B cell (primary cell): ENCODE measurements at regions of chr2 and their contacts with region 1.

Region 1: GRCh38 chr2:169694113-169694903 is at the starts of genes CFAP210 and PHOSPHO2:
- DNase-seq: peak; percentile 99
- ATAC-seq: peak; percentile 97
- H3K4me3 ChIP-seq: peak within 1 kb of the TSS; percentile 59 to 76 (median 72)
- H3K4me3 Mint-ChIP-seq: peak within 1 kb of the TSS; percentile 98
- H3K27ac ChIP-seq: peak within 1 kb of the TSS; percentile 85 to 90
- H3K27ac Mint-ChIP-seq: peak within 1 kb of the TSS; percentile 99
- H3K4me1 ChIP-seq: peaks cover 10 to 14% of the 10 kb centered on the region in 2 donors
- H3K4me1 Mint-ChIP-seq: peaks cover 18% of the 10 kb centered on the region
- H3K27me3 ChIP-seq: peaks cover 0 to 12% (median 7%) of the 10 kb centered on the region in 4 experiments
- H3K27me3 Mint-ChIP-seq: peaks cover 15% of the 10 kb centered on the region
- CTCF ChIP-seq: no peak
- total RNA-seq, gene CFAP210: not detected in 2 replicates
- total RNA-seq, gene PHOSPHO2: 8.4 and 9.4 TPM in 2 replicates

Region 2: DNA sequence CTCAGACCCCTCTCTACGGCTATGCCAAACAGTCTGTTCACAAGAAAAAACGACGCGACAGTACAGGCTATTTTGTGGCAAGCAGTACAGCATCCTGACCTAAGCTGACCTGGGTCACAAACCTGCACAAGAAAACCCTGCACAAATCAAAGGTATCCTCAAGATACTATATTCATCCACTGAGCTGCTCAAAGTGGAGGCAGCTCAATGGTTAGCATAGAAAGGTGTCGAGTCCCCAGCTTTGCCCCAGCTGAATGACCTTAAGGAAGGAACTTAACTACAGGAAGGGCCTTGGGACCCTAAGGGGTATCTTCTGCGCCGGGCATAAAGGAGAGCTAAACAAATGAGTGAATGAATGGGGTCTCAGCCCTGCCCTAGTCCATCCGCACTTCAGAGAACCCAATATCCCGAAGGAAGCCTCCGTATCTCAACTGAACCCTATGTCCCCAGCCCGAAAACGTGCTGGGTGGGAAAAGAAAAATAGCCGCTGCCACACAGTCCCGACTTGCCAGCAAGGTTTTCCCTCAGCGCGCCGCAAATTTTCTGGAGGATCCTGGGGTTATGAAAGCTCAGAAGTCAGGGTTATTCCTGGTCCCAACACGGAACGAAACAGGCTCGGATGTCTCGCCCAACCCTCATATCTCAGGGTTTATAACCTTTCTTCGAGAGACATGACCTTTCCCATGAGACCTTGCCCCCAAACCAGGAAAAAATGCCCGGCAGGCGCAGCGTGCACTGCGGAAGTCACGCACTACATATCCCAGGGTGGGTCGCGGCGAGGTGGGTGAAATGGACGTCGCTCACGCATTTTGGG is 120.9 kb before region 1 on chr2 and contains the start of gene FASTKD1:
- CTCF ChIA-PET with region 1: interaction called, 3 read pairs
- POLR2A ChIA-PET with region 1: no interaction called
- intact Hi-C with region 1: loop called (anchors 1 kb)
- DNase-seq: peak; percentile 90
- ATAC-seq: peak; percentile 100
- H3K4me3 ChIP-seq: peak within 1 kb of the TSS; percentile 74 to 99 (median 89)
- H3K4me3 Mint-ChIP-seq: peak within 1 kb of the TSS; percentile 96
- H3K27ac ChIP-seq: peak within 1 kb of the TSS; percentile 75 to 84
- H3K27ac Mint-ChIP-seq: peak within 1 kb of the TSS; percentile 88
- H3K4me1 ChIP-seq: peaks cover 5 to 6% of the 10 kb centered on the region in 2 donors
- H3K4me1 Mint-ChIP-seq: peaks cover 14% of the 10 kb centered on the region
- H3K27me3 ChIP-seq: no peaks in the 10 kb centered on the region
- H3K27me3 Mint-ChIP-seq: no peaks in the 10 kb centered on the region
- CTCF ChIP-seq: no peak
- total RNA-seq, gene FASTKD1: 28.1 and 31.0 TPM in 2 replicates

Region 3: GRCh38 chr2:169584005-169584877 is 110.1 kb before region 1 on chr2 and contains the start of gene PPIG:
- CTCF ChIA-PET with region 1: no interaction called
- POLR2A ChIA-PET with region 1: interaction called, 3 read pairs
- intact Hi-C with region 1: loop called (anchors 1 kb)
- DNase-seq: peak; percentile 94
- ATAC-seq: peak; percentile 89
- H3K4me3 ChIP-seq: peak within 1 kb of the TSS; percentile 70 to 99 (median 98)
- H3K4me3 Mint-ChIP-seq: peak within 1 kb of the TSS; percentile 99
- H3K27ac ChIP-seq: peak within 1 kb of the TSS; percentile 96 to 99
- H3K27ac Mint-ChIP-seq: peak within 1 kb of the TSS; percentile 99
- H3K4me1 ChIP-seq: peaks cover 12 to 24% of the 10 kb centered on the region in 2 donors
- H3K4me1 Mint-ChIP-seq: peaks cover 30% of the 10 kb centered on the region
- H3K27me3 ChIP-seq: no peaks in the 10 kb centered on the region
- H3K27me3 Mint-ChIP-seq: no peaks in the 10 kb centered on the region
- CTCF ChIP-seq: no peak
- total RNA-seq, gene PPIG: 78.6 and 82.4 TPM in 2 replicates

Region 4: DNA sequence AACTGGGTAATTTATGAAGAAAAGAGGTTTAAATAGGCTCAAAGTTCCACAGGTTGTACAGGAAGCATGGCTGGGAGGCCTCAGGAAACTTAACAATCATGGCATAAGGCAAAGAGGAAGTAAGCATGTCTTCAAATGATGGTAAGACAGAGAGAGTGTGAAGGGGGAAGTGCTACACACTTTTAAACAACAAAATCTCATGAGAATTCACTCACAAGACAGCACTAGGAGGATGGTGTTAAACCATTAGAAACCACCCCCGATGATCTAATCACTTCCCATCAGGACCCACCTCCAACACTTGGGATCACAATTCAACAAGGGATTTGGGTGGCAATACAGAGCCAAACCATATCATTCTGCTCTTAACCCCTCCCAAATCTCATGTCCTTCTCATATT is 35.0 kb before region 1 on chr2:
- CTCF ChIA-PET with region 1: no interaction called
- POLR2A ChIA-PET with region 1: no interaction called
- intact Hi-C with region 1: loop called (anchors 5 kb)
- DNase-seq: peak; percentile 55
- ATAC-seq: peak; percentile 73
- H3K4me3 ChIP-seq: no peak overlapping the region
- H3K4me3 Mint-ChIP-seq: peak overlapping the region; percentile 13
- H3K27ac ChIP-seq: peak overlapping the region; percentile 3 to 71
- H3K27ac Mint-ChIP-seq: peak overlapping the region; percentile 60
- H3K4me1 ChIP-seq: peaks cover 15 to 18% of the 10 kb centered on the region in 2 donors
- H3K4me1 Mint-ChIP-seq: peaks cover 16% of the 10 kb centered on the region
- H3K27me3 ChIP-seq: no peaks in the 10 kb centered on the region
- H3K27me3 Mint-ChIP-seq: no peaks in the 10 kb centered on the region
- CTCF ChIP-seq: no peak

Region 5: DNA sequence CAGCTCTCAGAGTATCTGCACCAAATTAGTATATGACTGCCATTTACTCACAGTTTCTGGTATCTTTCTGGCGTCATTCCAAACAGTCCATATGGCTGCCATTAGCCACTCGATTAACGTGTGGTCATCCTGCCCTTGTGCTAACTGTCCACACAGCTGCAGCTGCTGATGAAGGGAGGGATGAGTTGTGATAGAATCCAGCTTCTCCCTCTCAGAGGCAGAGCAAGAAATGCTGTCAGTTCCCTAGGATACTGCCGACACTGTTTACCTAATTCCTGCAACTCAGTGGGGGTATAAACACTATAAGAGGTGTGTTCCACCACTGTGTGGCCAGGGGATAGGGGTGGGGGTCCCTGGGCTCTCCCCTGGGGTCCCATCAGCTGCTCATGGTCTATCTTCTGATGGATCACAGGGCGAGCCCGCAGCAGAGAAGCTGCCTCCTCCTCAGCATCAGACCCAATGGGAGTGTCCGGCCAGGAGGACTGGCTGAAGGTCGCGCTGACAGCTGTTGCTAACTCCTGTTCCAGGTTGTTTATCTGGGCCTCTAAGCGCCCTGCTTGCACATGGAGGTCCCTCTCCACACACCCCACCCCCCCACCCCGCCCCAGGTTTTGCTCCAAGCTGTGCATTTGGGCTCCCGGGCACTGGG is 22.1 kb after region 1 on chr2:
- CTCF ChIA-PET with region 1: no interaction called
- POLR2A ChIA-PET with region 1: no interaction called
- intact Hi-C with region 1: no loop called
- DNase-seq: no peak
- ATAC-seq: no peak
- H3K4me3 ChIP-seq: no peak overlapping the region
- H3K4me3 Mint-ChIP-seq: no peak overlapping the region
- H3K27ac ChIP-seq: no peak overlapping the region
- H3K27ac Mint-ChIP-seq: no peak overlapping the region
- H3K4me1 ChIP-seq: no peaks in the 10 kb centered on the region
- H3K4me1 Mint-ChIP-seq: no peaks in the 10 kb centered on the region
- H3K27me3 ChIP-seq: no peaks in the 10 kb centered on the region
- H3K27me3 Mint-ChIP-seq: no peaks in the 10 kb centered on the region
- CTCF ChIP-seq: no peak

Region 6: DNA sequence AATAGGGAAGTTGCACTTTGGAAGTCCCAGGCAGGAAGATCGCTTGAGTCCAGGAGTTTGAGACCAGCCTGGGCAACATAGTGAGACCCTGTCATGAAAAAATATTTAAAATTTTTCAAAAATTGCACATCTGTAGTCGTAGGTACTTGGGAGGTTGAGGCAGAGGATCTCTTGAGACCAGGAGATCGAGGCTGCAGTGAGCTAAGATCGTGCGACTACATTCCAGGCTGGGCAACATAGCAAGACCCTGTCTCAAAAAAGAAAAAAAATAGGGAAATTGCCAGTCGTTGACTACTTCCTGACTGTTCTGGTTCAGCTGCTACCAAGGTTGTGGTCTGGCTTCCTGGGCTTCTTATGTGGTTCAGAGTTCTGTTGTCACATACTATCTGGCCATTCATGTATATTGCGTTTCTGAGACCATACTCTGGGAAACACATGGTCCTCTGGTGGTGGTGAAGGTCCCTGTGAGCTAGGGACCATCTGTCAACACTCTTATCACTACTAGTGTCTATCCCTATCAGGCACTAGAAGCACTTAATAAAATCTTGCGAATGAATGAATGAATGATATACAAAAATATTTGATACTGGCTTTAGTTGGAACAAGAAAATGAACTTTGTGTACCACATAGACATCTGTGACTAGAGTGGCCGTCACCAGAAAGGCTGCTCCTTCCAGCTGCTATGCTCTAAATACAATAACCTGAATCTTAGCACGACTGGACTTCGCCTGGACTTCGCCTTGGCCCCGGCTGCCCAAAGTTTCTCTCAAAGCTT is 38.5 kb after region 1 on chr2:
- CTCF ChIA-PET with region 1: no interaction called
- POLR2A ChIA-PET with region 1: no interaction called
- intact Hi-C with region 1: loop called (anchors 2 kb)
- DNase-seq: peak; percentile 29
- ATAC-seq: no peak
- H3K4me3 ChIP-seq: peak overlapping the region in 3 of 5 experiments; percentile 59 to 73 (median 67)
- H3K4me3 Mint-ChIP-seq: peak overlapping the region; percentile 97
- H3K27ac ChIP-seq: no peak overlapping the region
- H3K27ac Mint-ChIP-seq: no peak overlapping the region
- H3K4me1 ChIP-seq: peaks cover 14 to 15% of the 10 kb centered on the region in 2 donors
- H3K4me1 Mint-ChIP-seq: peaks cover 20% of the 10 kb centered on the region
- H3K27me3 ChIP-seq: peaks cover 0 to 16% (median 11%) of the 10 kb centered on the region in 4 experiments
- H3K27me3 Mint-ChIP-seq: peaks cover 13% of the 10 kb centered on the region
- CTCF ChIP-seq: no peak

Region 7: DNA sequence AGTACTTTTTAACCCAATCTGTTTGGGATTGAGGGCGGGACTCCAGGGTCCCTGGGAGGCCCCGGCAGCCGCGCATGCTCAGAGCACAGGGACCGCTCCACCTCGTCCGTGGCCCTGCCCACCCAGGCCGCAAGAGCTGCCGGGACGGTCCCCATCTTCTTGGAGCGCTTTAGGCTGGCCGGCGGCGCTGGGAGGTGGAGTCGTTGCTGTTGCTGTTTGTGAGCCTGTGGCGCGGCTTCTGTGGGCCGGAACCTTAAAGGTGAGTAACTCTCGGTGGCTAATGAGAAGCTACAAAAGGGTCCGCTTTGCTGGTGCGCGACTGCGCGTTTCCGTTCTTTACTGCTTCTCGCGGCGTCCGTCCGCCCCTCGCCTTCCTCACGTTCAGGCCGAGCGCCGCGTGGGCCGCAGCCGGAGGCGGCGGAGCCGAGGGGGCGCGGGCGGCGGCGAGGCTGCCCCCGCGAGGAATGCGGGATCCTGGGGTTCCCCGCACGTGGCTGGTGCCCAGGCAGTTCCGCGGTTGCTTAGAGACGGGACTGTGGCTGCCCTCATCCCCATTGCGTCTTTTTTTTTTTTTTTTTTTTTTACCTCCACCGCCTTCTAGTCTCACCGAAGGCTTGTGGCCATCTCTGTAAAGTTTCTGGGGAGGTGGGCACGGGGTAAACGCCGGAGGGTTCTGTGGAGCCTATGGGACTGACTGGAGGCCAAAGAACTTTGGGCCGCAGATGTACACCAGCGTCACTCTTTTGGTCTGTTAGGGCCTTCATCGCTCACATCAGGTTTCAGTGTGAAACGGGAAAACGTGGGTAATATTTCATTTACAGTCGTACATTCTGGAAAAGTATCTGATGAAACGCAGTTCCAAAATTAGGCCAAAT is 104.6 kb after region 1 on chr2 and contains the start of gene SSB:
- CTCF ChIA-PET with region 1: no interaction called
- POLR2A ChIA-PET with region 1: interaction called, 3 read pairs
- intact Hi-C with region 1: loop called (anchors 1 kb)
- DNase-seq: peak; percentile 96
- ATAC-seq: peak; percentile 96
- H3K4me3 ChIP-seq: peak within 1 kb of the TSS; percentile 60 to 91 (median 84)
- H3K4me3 Mint-ChIP-seq: peak within 1 kb of the TSS; percentile 95
- H3K27ac ChIP-seq: peak within 1 kb of the TSS; percentile 86 to 95
- H3K27ac Mint-ChIP-seq: peak within 1 kb of the TSS; percentile 88
- H3K4me1 ChIP-seq: peaks cover 10 to 15% of the 10 kb centered on the region in 2 donors
- H3K4me1 Mint-ChIP-seq: peaks cover 25% of the 10 kb centered on the region
- H3K27me3 ChIP-seq: no peaks in the 10 kb centered on the region
- H3K27me3 Mint-ChIP-seq: no peaks in the 10 kb centered on the region
- CTCF ChIP-seq: no peak
- total RNA-seq, gene SSB: 76.2 and 81.3 TPM in 2 replicates

Region 8: DNA sequence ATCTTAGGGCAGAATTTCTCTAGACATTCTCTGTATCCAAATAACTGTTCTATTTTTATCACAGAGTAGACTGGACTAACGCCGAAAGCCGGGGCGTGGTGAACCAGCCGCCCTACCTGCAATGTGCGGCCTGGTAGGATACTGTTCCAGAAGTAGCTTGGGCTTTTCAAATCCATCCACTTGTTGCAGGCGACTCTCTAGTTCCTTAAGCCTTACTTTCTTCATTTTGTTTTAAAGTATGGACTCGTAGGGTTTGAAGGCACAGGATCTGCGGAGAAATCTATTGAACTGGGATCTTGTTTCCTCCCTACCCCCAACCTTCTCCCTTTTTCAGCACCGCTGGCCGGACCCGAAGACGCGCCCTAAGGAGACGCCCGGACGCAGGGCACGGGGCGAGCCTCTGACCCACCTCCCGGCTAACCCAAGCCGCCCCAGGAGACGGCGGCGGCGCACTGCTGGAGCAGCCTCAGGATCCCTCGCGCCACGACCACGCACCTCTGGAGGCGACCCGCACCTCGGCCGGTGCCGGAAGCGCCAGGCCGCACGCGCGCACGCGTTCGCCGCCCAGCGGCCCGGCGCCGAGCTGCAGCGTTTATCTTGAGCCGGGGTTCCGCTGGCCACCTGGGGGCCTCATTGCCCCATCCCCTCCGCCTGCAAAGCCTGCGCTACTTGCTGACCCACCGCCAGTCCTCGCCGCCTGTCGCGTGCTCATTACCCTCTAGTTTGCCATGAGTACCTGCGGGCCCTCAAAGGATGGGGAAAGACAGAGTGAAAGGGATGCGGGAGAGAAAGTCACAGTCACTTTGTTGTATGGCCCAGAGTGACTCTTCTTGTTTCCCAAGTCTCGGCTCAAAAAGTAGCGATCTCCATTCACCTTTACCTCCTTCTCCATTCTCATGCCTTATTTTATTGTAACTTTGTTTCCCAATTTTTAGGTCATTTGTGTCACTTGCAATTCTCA is 130.3 kb after region 1 on chr2 and contains the start of gene METTL5:
- CTCF ChIA-PET with region 1: no interaction called
- POLR2A ChIA-PET with region 1: no interaction called
- intact Hi-C with region 1: loop called (anchors 1 kb)
- DNase-seq: peak; percentile 86
- ATAC-seq: peak; percentile 74
- H3K4me3 ChIP-seq: peak within 1 kb of the TSS; percentile 64 to 90 (median 68)
- H3K4me3 Mint-ChIP-seq: peak within 1 kb of the TSS; percentile 90
- H3K27ac ChIP-seq: peak within 1 kb of the TSS in 1 of 2 donors; percentile 73
- H3K27ac Mint-ChIP-seq: peak within 1 kb of the TSS; percentile 90
- H3K4me1 ChIP-seq: peaks cover 28 to 34% of the 10 kb centered on the region in 2 donors
- H3K4me1 Mint-ChIP-seq: peaks cover 47% of the 10 kb centered on the region
- H3K27me3 ChIP-seq: no peaks in the 10 kb centered on the region
- H3K27me3 Mint-ChIP-seq: no peaks in the 10 kb centered on the region
- CTCF ChIP-seq: peak; percentile 94
- total RNA-seq, gene METTL5: 36.4 and 37.0 TPM in 2 replicates

Region 9: GRCh38 chr2:169865492-169865891 is 171.2 kb after region 1 on chr2:
- CTCF ChIA-PET with region 1: no interaction called
- POLR2A ChIA-PET with region 1: no interaction called
- intact Hi-C with region 1: no loop called
- DNase-seq: no peak
- ATAC-seq: no peak
- H3K4me3 ChIP-seq: no peak overlapping the region
- H3K4me3 Mint-ChIP-seq: no peak overlapping the region
- H3K27ac ChIP-seq: no peak overlapping the region
- H3K27ac Mint-ChIP-seq: no peak overlapping the region
- H3K4me1 ChIP-seq: no peaks in the 10 kb centered on the region
- H3K4me1 Mint-ChIP-seq: peaks cover 16% of the 10 kb centered on the region
- H3K27me3 ChIP-seq: no peaks in the 10 kb centered on the region
- H3K27me3 Mint-ChIP-seq: no peaks in the 10 kb centered on the region
- CTCF ChIP-seq: no peak